Activated T-helper 2 cell treated with anti-CD3 and anti-CD28 coated beads, Interferon-gamma antibody, Interleukin-2, Interleukin-4, amounts not matched to agents 10 μg/mL and 5 μg/mL and 100 μg/mL, durations not matched to agents 14 hours and 24 hours and 36 hours (primary cell): ENCODE measurements at regions of chr2 and their contacts with region 1.

Region 1: DNA sequence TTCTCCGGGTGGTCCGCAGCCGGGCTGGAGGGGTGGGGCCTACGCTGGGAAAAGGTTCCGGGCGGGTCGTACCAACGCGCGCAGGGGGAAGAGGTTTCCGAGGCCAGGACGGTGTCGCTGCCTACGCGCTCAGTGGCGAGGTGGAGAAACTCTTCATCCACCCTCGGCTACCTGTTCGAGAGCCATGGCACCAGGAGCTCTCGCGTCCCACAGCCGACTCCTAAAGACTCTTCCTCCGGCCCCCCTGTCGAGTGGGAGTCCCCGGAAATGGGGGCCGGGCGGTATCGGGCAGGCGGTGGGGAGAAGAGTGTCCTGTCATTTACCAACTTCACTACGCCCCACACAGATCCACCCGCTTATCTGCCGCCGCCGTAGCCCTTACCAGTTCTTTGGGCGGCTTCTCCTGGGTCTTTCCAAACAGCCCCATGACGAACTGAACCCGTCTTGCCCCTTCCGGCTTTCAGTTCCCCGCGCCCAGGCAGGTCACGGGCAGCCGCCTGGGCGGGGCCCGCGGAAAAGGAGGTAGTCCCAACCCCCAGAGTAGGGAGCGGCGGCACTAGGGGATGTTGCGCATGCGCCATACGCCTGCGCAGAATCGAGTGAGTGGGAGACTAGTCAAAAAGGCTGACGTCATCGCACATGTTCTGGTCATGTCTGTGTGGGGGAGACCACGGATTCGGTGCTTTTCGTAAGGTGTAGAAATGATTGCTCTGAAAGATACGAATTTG is at the start of gene CHMP3:
- DNase-seq: peak; percentile 96
- H3K4me3 Mint-ChIP-seq: peak within 1 kb of the TSS; percentile 90
- H3K27ac Mint-ChIP-seq: peak within 1 kb of the TSS; percentile 98
- H3K4me1 Mint-ChIP-seq: peaks cover 37% of the 10 kb centered on the region
- H3K27me3 Mint-ChIP-seq: no peaks in the 10 kb centered on the region
- total RNA-seq, gene CHMP3: 31.4 and 33.6 TPM in 2 replicates

Region 2: DNA sequence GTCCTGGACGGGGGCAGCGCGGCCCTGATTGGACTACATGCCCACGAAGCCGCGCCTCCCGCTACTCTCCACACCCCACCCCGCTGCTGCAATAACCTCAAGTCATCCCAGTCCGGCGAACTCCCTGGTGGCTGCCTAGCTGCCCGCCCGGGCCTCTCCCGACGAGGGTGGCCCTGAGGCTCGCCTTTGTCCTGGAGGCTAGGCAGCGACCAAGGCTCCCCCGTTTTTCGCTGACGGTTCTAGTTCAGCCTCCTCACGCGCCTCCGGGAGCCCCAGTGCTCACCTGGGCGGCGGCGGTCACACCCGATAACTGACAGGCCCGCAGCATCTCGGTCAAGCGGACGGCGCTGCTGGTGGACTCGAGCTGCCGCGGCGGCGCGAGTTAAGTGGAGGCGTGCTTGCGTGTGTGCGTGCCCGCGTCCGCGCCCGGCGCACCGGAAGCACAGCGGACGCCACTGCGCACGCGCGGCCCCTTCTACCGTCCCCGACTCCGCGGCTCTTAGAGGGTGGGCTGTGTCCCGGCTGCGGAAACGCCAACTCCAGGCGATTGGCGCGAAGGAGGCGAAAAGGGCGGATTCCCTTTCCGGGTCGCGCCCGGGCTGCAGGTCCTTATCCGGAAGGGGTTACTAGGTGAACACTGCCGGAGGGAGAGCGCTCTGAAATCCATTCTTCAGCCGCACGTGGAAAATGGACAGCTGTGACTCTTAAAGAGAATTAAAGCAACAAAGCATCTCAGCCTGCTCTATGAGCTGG is 367.9 kb before region 1 on chr2 and contains the start of gene IMMT:
- intact Hi-C with region 1: loop called (anchors 10 kb)
- DNase-seq: peak; percentile 91
- H3K4me3 Mint-ChIP-seq: peak within 1 kb of the TSS; percentile 96
- H3K27ac Mint-ChIP-seq: peak within 1 kb of the TSS; percentile 89
- H3K4me1 Mint-ChIP-seq: peaks cover 43% of the 10 kb centered on the region
- H3K27me3 Mint-ChIP-seq: no peaks in the 10 kb centered on the region
- total RNA-seq, gene IMMT: 160 and 180 TPM in 2 replicates

Region 3: GRCh38 chr2:86518481-86518880 is 44.6 kb before region 1 on chr2:
- intact Hi-C with region 1: no loop called
- DNase-seq: no peak
- H3K4me3 Mint-ChIP-seq: no peak overlapping the region
- H3K27ac Mint-ChIP-seq: no peak overlapping the region
- H3K4me1 Mint-ChIP-seq: no peaks in the 10 kb centered on the region
- H3K27me3 Mint-ChIP-seq: no peaks in the 10 kb centered on the region

Region 4: DNA sequence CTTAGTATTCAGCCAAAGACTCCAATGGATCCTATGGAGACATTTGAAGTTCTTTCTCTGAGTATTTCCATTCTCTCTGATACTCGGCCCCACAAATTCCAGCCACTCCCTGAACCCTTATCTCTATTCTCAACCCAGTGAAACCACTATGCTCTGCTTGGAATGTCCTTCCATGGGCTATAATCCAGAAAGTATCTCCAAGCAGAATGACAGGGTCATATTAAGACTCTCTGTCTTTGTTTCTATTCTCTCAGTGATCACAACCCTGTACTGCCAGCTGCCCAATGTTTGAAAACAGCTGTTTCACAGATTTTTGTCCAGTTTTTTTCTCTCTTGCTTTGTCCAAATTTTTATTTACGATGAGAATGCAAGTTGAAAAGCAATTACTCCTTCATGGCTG is 21.8 kb before region 1 on chr2:
- intact Hi-C with region 1: no loop called
- DNase-seq: no peak
- H3K4me3 Mint-ChIP-seq: no peak overlapping the region
- H3K27ac Mint-ChIP-seq: no peak overlapping the region
- H3K4me1 Mint-ChIP-seq: no peaks in the 10 kb centered on the region
- H3K27me3 Mint-ChIP-seq: no peaks in the 10 kb centered on the region

Region 5: DNA sequence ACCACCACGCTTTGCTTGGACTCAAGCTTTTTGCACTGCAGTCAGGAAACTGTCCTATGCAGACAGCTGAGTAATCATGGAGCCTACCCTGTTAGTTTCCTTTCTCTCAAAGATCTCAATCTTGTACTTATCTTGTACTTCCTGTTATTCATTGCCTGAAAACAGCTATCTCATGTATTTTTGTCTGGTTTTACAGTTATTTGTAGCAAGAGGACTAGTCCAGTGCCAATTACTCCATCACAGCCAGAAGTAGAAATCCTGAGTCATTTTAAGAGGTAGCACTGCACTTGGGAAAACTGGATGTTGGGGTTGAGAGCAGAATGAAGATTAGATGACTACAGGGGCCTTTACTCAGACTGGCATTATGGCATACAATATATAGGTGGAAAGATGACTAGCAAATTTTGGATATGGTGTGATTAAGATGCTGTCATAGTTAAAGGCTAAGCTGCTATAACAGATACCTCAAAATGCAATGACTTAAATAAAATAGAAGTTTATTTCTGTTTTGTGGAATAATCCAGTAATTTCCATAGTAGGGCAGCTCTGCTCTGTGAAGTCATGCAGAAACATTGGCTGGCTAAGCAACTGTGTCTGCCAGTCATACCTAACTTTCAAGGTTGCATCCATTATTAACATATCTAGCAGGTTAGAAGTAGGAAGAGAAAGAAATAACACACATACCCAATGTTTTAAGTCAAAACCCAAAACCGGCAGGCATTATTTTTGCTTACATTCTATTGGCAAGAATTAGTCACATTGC is 21.2 kb after region 1 on chr2:
- intact Hi-C with region 1: loop called (anchors 1 kb)
- DNase-seq: no peak
- H3K4me3 Mint-ChIP-seq: peak overlapping the region; percentile 23
- H3K27ac Mint-ChIP-seq: peak overlapping the region; percentile 76
- H3K4me1 Mint-ChIP-seq: peaks cover 20% of the 10 kb centered on the region
- H3K27me3 Mint-ChIP-seq: peaks cover 1% of the 10 kb centered on the region